ENCODE measurements at regions of chr6 and their contacts with region 1.

Region 1: GRCh38 chr6:77415706-77416105 is 47.6 kb downstream of the HTR1B start:
- DNase-seq: no peak
- H3K4me3 ChIP-seq: no peak overlapping the region
- H3K27ac ChIP-seq: no peak overlapping the region
- H3K4me1 ChIP-seq: no peaks in the 10 kb centered on the region
- H3K27me3 ChIP-seq: no peaks in the 10 kb centered on the region
- CTCF ChIP-seq: no peak
- EP300 ChIP-seq: no peak
- POLR2A ChIP-seq: no peak

Region 2: DNA sequence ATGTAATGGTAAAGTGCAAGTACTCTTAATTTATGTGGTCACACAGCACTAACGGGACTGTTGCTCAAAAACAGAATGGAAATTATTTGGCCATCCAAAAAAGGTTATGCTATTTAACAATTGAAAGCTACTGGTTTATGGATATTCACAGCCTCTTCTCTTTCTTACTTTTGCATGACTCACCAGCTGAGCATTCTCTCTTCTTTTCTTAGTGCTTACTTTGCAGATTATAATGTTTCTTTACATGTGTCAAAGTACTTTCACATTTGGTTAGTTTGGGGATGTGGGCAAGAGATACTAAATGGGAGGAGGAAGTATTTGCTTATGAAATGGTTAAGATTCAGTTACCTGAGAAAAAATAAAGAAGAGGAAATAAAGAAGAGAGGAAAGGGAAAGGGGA is 562.9 kb before region 1 on chr6:
- in situ Hi-C with region 1: no loop called
- intact Hi-C with region 1: loop called (anchors 5 kb)
- DNase-seq: no peak
- H3K4me3 ChIP-seq: no peak overlapping the region
- H3K27ac ChIP-seq: no peak overlapping the region
- H3K4me1 ChIP-seq: no peaks in the 10 kb centered on the region
- H3K27me3 ChIP-seq: no peaks in the 10 kb centered on the region
- CTCF ChIP-seq: no peak
- EP300 ChIP-seq: no peak
- POLR2A ChIP-seq: no peak